ENCODE measurements at regions of chr22 and their contacts with region 1.

Region 1: DNA sequence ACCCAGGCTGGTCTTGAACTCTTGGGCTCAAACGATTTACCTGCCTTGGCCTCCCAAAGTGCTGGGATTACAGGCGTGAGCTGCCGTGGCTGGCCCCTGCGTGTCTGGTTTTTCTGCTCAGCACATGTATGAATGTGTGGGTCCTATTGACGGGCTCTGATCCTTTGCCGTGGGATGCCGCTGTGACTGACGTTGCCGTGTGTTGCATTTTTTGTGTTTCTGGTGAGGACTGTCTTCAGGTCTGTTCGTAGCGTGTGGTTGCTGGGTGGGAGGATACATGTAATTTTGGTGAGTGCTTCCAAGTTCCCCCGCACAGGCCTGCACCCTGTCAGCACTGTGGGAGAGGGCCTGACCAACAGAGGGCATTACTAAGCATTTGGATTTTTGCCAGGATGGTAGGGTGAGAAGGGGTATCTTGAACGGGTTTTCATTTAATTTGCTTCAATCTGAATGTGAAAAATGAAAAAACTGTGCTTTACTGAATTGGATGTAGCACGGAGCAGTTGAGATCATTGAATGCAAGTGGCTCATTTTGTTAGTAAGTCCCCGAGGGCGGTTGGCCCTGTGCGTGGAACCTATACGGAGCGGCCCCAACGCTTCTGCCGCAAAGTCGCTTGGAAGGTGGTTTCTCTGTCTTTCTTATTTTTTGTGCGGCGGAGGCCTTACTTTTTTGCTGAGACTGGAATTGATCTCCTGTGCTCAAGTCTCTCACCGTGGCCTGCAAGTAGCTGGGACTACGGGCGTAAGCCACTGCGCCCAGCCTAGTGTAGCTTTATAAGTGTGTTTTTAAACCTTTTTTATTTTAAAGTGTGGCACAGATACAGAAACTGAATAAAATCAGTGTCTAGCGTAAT is 8.2 kb downstream of the ZBED4 start:
- DNase-seq: peak; percentile 37
- H3K4me3 ChIP-seq: no peak overlapping the region
- H3K27ac ChIP-seq: no peak overlapping the region
- H3K4me1 ChIP-seq: peaks cover 0 to 59% (median 16%) of the 10 kb centered on the region in 6 donors
- H3K27me3 ChIP-seq: no peaks in the 10 kb centered on the region
- CTCF ChIP-seq: no peak
- POLR2A ChIP-seq: no peak

Region 2: DNA sequence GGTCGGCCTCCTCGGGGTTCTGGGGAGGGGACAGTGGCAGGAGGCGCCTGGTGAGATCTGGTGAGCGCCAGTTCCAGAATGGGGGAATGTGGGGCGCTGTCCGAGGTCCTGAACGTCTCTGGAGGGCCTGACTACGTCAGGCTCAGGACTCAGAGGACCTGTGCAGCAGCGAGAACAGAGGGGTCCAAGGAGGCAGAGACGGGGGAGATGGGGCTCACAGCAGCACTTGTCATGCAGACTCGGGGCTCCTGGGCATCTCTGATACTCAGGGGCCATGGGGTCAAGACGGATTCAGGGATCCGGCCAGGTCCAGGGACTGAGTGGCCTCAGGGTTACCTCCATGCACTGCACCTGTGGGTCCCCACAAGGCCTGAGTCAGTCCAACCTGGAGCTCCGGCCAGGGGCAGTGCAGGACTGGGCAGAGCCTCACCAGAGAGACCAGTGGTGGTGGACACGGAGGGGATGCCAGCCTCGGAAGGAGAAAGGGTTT is 126.4 kb before region 1 on chr22:
- intact Hi-C with region 1: no loop called
- DNase-seq: no peak
- H3K4me3 ChIP-seq: no peak overlapping the region
- H3K27ac ChIP-seq: no peak overlapping the region
- H3K4me1 ChIP-seq: no peaks in the 10 kb centered on the region
- H3K27me3 ChIP-seq: peaks cover 0 to 88% (median 4%) of the 10 kb centered on the region in 7 donors
- CTCF ChIP-seq: no peak
- POLR2A ChIP-seq: no peak

Region 3: GRCh38 chr22:49917974-49918910 is 56.4 kb after region 1 on chr22 and contains the starts of genes ALG12 and CRELD2:
- intact Hi-C with region 1: loop called (anchors 10 kb)
- DNase-seq: peak; percentile 98
- H3K4me3 ChIP-seq: peak within 1 kb of the TSS; percentile 69 to 92 (median 76)
- H3K27ac ChIP-seq: peak within 1 kb of the TSS; percentile 81 to 96 (median 94)
- H3K4me1 ChIP-seq: peaks cover 9 to 41% (median 26%) of the 10 kb centered on the region in 6 donors
- H3K27me3 ChIP-seq: no peaks in the 10 kb centered on the region
- CTCF ChIP-seq: peak in 6 of 11 experiments; percentile 12 to 69 (median 40)
- POLR2A ChIP-seq: peak in 1 of 3 donors; percentile 56
- total RNA-seq, gene ALG12: 10.2 to 20.1 (median 13.3) TPM
- total RNA-seq, gene CRELD2: 23.2 to 46.3 (median 38.1) TPM

Region 4: DNA sequence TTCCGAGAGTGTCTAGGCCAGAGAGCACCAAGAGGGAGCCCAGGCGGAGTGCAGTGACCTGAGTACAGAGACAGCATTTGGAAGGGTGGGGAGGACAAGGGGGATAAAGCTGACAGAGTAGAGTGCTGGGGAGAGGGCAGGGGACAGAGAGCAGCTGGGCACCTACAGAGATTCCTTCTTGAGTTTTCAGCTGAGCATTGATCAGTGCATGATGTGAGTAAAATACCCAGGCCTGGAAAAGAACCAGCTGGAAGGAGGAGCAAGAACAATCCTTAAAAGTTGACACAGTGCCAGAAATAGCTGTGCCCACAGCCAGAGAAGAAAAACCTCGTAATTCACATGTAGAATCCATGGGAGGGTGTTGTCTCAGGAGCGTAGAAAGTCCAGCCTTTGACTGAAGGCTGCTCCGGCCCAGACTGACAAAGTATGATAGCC is 274.7 kb after region 1 on chr22:
- intact Hi-C with region 1: no loop called
- DNase-seq: no peak
- H3K4me3 ChIP-seq: no peak overlapping the region
- H3K27ac ChIP-seq: no peak overlapping the region
- H3K4me1 ChIP-seq: no peaks in the 10 kb centered on the region
- H3K27me3 ChIP-seq: peaks cover 0 to 8% (median 0%) of the 10 kb centered on the region in 7 donors
- CTCF ChIP-seq: no peak
- POLR2A ChIP-seq: no peak